Ascending aorta (tissue), 2 donors: ENCODE measurements at regions of chr21 and their contacts with region 1.

Region 1: GRCh38 chr21:39518138-39518846 is 66.5 kb downstream of the SH3BGR start:
- DNase-seq: no peak
- H3K4me3 ChIP-seq: no peak overlapping the region
- H3K27ac ChIP-seq: no peak overlapping the region
- H3K4me1 ChIP-seq: no peaks in the 10 kb centered on the region
- H3K27me3 ChIP-seq: no peaks in the 10 kb centered on the region
- CTCF ChIP-seq: peak; percentile 25 to 87 (median 83)

Region 2: GRCh38 chr21:39715804-39716397 is 197.6 kb after region 1 on chr21:
- intact Hi-C with region 1: loop called (anchors 1 kb)
- DNase-seq: peak in 1 of 2 donors; percentile 69
- H3K4me3 ChIP-seq: no peak overlapping the region
- H3K27ac ChIP-seq: no peak overlapping the region
- H3K4me1 ChIP-seq: no peaks in the 10 kb centered on the region
- H3K27me3 ChIP-seq: no peaks in the 10 kb centered on the region
- CTCF ChIP-seq: peak; percentile 28 to 65 (median 38)

Region 3: GRCh38 chr21:40120940-40121575 is 602.8 kb after region 1 on chr21:
- intact Hi-C with region 1: loop called (anchors 10 kb)
- DNase-seq: no peak
- H3K4me3 ChIP-seq: no peak overlapping the region
- H3K27ac ChIP-seq: no peak overlapping the region
- H3K4me1 ChIP-seq: no peaks in the 10 kb centered on the region
- H3K27me3 ChIP-seq: no peaks in the 10 kb centered on the region
- CTCF ChIP-seq: peak; percentile 82 to 92 (median 90)